ENCODE measurements at regions of chr15 and their contacts with region 1.

Region 1: GRCh38 chr15:57541805-57542504 is 49.7 kb upstream of the MYZAP start:
- DNase-seq: peak; percentile 53
- CTCF ChIP-seq: peak; percentile 76

Region 2: GRCh38 chr15:57522148-57522547 is 19.8 kb before region 1 on chr15:
- CTCF ChIA-PET with region 1: interaction called, 65 read pairs
- POLR2A ChIA-PET with region 1: no interaction called
- DNase-seq: no peak
- CTCF ChIP-seq: no peak

Region 3: GRCh38 chr15:57561041-57561711 is 19.2 kb after region 1 on chr15:
- CTCF ChIA-PET with region 1: interaction called, 18 read pairs
- POLR2A ChIA-PET with region 1: no interaction called
- DNase-seq: peak; percentile 72
- CTCF ChIP-seq: peak; percentile 78